Dorsolateral prefrontal cortex (tissue), 120 donors: ENCODE measurements at regions of chr14 and their contacts with region 1.

Region 1: GRCh38 chr14:23320774-23321571 is at the start of gene PABPN1:
- DNase-seq: peak; percentile 96 to 100 (median 100)
- H3K4me3 ChIP-seq: peak within 1 kb of the TSS; percentile 74 to 97 (median 89)
- H3K27ac ChIP-seq: peak within 1 kb of the TSS; percentile 88 to 99 (median 98)
- H3K27me3 ChIP-seq: no peaks in the 10 kb centered on the region
- CTCF ChIP-seq: peak in 20 of 56 donors; percentile 7 to 44 (median 14)
- total RNA-seq, gene PABPN1: 124 to 236 (median 157) TPM

Region 2: GRCh38 chr14:23269193-23269592 is 51.8 kb before region 1 on chr14:
- intact Hi-C with region 1: loop called in 1 of 2 experiments (anchors 10 kb)
- DNase-seq: no peak
- H3K4me3 ChIP-seq: no peak overlapping the region
- H3K27ac ChIP-seq: no peak overlapping the region
- H3K27me3 ChIP-seq: no peaks in the 10 kb centered on the region
- CTCF ChIP-seq: no peak

Region 3: GRCh38 chr14:23306410-23307145 is 14.4 kb before region 1 on chr14 and contains the start of gene BCL2L2:
- intact Hi-C with region 1: loop called (anchors 1 kb)
- DNase-seq: peak; percentile 87 to 92 (median 89)
- H3K4me3 ChIP-seq: peak within 1 kb of the TSS; percentile 58 to 99 (median 88)
- H3K27ac ChIP-seq: peak within 1 kb of the TSS; percentile 66 to 98 (median 93)
- H3K27me3 ChIP-seq: no peaks in the 10 kb centered on the region
- CTCF ChIP-seq: peak in 9 of 56 donors; percentile 19 to 38 (median 31)
- total RNA-seq, gene BCL2L2: 91.0 to 167 (median 129) TPM